PC-9 (cell line): ENCODE measurements at regions of chr5 and their contacts with region 1.

Region 1: DNA sequence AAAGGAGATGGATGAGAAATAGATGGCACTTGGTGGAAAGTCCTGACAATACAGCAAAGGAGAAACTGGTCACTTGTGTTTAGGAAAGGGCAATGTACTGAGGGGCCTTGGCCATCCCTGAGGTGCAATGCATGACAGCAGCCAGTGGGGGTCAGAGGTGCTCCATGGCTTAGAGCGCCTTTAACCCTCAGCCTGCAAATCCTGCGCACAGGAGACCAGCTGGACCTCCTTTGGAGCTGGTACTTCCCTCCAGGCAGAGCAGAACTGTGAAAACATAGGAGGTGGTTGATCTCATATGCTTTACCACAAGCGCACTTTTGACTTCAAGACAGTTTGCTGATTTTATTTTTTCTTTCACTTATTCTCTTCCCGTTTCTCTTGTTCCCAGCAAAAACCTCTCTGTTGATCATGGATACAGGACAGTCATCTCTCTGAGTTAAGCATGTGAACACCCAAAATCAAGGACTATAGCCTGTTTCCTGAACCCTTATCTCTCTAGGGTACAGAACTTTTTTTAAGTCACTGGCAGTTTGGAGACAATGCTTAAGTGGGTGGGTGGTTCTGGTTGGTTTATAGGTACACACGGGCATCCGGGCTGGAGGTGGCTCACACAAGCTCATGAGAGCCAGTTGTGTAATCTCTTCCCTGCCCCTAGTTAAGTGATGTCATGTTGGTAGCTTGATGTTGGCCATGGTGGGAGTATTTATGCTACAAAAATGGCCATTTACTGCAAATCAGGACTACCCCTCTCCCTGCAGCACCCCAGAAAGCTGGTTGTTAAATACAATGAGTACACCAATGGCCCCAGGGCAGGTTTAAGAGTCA is 37.6 kb upstream of the ANKRD55 start:
- DNase-seq: peak; percentile 83 to 84
- H3K4me3 ChIP-seq: no peak overlapping the region
- H3K27ac ChIP-seq: peak overlapping the region; percentile 44
- H3K4me1 ChIP-seq: peaks cover 11% of the 10 kb centered on the region
- H3K27me3 ChIP-seq: no peaks in the 10 kb centered on the region
- CTCF ChIP-seq: peak; percentile 98

Region 2: DNA sequence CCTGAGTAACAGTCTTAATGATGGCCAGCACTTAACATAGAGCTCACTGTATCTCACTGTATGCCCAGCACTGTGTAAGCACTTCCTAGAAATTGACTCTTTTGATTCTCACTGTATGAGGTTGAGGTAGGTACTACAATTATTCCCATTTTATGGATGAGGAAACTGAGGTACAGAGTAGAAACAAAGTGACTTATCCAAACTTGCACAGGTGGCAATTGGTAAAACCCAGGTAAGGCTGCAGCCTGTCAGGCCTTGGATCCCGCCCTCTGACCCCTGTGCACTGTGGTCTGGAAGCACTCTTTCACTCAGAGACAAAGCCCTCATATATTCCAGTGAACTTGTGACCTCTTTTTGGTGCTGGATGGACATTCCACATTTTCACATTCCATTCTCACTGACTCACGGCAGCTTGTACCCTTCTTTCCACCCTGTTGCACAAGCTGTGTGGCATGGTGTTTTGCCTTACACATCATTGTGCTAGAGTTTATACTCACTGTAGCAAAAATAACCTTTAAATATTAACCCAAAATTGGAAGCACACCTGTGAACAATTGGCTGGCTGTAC is 59.4 kb before region 1 on chr5:
- CTCF ChIA-PET with region 1: no interaction called
- POLR2A ChIA-PET with region 1: no interaction called
- intact Hi-C with region 1: loop called (anchors 5 kb)
- DNase-seq: peak; percentile 70 to 94
- H3K4me3 ChIP-seq: no peak overlapping the region
- H3K27ac ChIP-seq: peak overlapping the region; percentile 87
- H3K4me1 ChIP-seq: peaks cover 26% of the 10 kb centered on the region
- H3K27me3 ChIP-seq: no peaks in the 10 kb centered on the region
- CTCF ChIP-seq: no peak

Region 3: DNA sequence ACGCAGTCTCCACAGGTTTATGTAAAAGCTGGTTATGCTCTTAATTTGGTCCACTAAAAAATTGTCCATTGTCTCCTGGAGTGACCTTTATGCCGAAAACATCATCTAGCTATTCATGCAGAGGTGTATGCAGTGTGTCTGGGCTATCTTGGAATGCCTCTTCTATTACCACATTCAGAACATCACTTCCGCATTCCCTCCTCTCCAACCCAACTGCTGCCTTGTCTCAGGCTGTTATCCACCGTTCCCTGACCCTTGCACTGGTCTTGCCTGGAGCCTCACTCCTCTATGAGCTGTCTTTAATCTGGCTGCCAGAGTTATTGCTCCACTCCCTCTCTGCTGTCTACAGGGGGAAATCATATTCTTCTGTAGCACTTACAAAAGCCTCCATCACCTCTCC is 176.5 kb after region 1 on chr5:
- CTCF ChIA-PET with region 1: interaction called, 3 read pairs
- POLR2A ChIA-PET with region 1: no interaction called
- intact Hi-C with region 1: loop called (anchors 2 kb)
- DNase-seq: peak; percentile 75 to 96
- H3K4me3 ChIP-seq: no peak overlapping the region
- H3K27ac ChIP-seq: peak overlapping the region; percentile 79
- H3K4me1 ChIP-seq: peaks cover 32% of the 10 kb centered on the region
- H3K27me3 ChIP-seq: no peaks in the 10 kb centered on the region
- CTCF ChIP-seq: no peak

Region 4: GRCh38 chr5:56638061-56638621 is 367.4 kb after region 1 on chr5:
- CTCF ChIA-PET with region 1: no interaction called
- POLR2A ChIA-PET with region 1: no interaction called
- intact Hi-C with region 1: loop called (anchors 5 kb)
- DNase-seq: peak; percentile 64 to 70
- H3K4me3 ChIP-seq: no peak overlapping the region
- H3K27ac ChIP-seq: no peak overlapping the region
- H3K4me1 ChIP-seq: peaks cover 40% of the 10 kb centered on the region
- H3K27me3 ChIP-seq: no peaks in the 10 kb centered on the region
- CTCF ChIP-seq: no peak

Region 5: GRCh38 chr5:56838409-56839039 is 567.7 kb after region 1 on chr5:
- CTCF ChIA-PET with region 1: interaction called, 6 read pairs
- POLR2A ChIA-PET with region 1: no interaction called
- intact Hi-C with region 1: loop called (anchors 1 kb)
- DNase-seq: peak in 1 of 2 experiments; percentile 58
- H3K4me3 ChIP-seq: no peak overlapping the region; the same call in 1 of the 2 replicates
- H3K27ac ChIP-seq: peak overlapping the region; percentile 32
- H3K4me1 ChIP-seq: peaks cover 21% of the 10 kb centered on the region
- H3K27me3 ChIP-seq: no peaks in the 10 kb centered on the region
- CTCF ChIP-seq: peak; percentile 75

Region 6: GRCh38 chr5:57277085-57277484 is 1006.3 kb after region 1 on chr5:
- CTCF ChIA-PET with region 1: no interaction called
- POLR2A ChIA-PET with region 1: no interaction called
- intact Hi-C with region 1: loop called (anchors 1 kb)
- DNase-seq: no peak
- H3K4me3 ChIP-seq: no peak overlapping the region
- H3K27ac ChIP-seq: no peak overlapping the region
- H3K4me1 ChIP-seq: no peaks in the 10 kb centered on the region
- H3K27me3 ChIP-seq: no peaks in the 10 kb centered on the region
- CTCF ChIP-seq: peak; percentile 65